ENCODE measurements at regions of chr6 and their contacts with region 1.

Region 1: GRCh38 chr6:52497652-52498408 is 77.7 kb downstream of the EFHC1 start:
- DNase-seq: no peak
- ATAC-seq: no peak
- H3K4me3 ChIP-seq: no peak overlapping the region
- H3K27ac ChIP-seq: 0 out of 2 replicates have a peak overlapping the region, but pooled peaks have one; percentile 18
- H3K4me1 ChIP-seq: peaks cover 2% of the 10 kb centered on the region; the same call in 1 of the 2 replicates
- H3K27me3 ChIP-seq: no peaks in the 10 kb centered on the region
- CTCF ChIP-seq: no peak

Region 2: DNA sequence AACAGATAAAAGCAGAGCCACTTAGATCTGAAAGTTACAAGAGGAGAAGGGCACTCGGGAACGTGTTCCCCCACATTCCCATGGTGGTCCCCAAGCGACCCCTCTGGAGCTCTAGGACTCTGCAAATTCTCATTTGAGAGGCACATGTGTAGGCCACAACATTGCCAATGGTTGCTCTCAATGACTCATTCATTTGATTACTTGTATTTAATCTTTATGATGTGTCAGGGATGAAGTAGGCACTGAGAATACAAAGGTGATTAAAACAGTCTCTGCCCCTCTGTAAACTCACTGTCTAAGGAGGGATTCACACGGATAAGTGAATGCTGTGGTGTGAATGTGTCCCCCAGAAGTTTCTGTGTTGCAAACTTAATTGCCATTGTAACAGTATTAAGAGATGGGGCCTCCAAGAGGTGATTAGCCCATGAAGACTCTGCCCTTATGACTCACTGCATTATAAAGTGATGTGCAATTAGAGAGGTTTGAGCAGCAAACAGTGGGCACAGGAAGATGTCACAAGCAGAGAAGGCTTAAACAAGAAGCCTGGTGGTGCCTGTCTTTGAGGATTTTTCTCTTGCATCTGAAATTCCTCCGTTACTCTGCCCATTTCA is 113.0 kb after region 1 on chr6:
- CTCF ChIA-PET with region 1: no interaction called
- POLR2A ChIA-PET with region 1: interaction called, 10 read pairs
- in situ Hi-C with region 1: no loop called
- intact Hi-C with region 1: no loop called
- DNase-seq: no peak
- ATAC-seq: no peak
- H3K4me3 ChIP-seq: no peak overlapping the region
- H3K27ac ChIP-seq: no peak overlapping the region
- H3K4me1 ChIP-seq: no peaks in the 10 kb centered on the region
- H3K27me3 ChIP-seq: no peaks in the 10 kb centered on the region
- CTCF ChIP-seq: no peak

Measured in Panc1 (cell line).